PC-3 (cell line): ENCODE measurements at regions of chrX and their contacts with region 1.

Region 1: DNA sequence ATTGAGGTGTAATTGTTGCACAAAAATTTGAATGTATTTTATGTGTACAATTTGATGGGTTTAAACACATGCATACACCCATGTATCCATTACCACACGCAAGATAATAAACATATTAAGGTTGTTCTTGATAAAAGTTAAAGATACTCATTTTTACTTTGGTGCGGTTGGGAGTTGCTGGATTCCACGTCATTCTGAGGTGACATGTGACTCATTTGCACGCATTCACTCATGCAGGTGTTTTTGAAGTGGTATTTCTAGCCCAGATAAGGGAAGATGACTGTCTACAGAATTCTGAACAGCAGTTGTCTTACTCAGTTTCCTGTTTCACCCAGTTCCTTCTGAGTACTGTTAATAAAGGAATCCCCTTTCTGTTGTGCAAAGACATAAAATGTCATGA is 142.0 kb downstream of the RTL3 start:
- DNase-seq: peak; percentile 80
- ATAC-seq: peak; percentile 56
- H3K4me3 ChIP-seq: no peak overlapping the region
- H3K27ac ChIP-seq: peak overlapping the region; percentile 67
- H3K4me1 ChIP-seq: peaks cover 33% of the 10 kb centered on the region
- H3K27me3 ChIP-seq: no peaks in the 10 kb centered on the region
- CTCF ChIP-seq: no peak

Region 2: DNA sequence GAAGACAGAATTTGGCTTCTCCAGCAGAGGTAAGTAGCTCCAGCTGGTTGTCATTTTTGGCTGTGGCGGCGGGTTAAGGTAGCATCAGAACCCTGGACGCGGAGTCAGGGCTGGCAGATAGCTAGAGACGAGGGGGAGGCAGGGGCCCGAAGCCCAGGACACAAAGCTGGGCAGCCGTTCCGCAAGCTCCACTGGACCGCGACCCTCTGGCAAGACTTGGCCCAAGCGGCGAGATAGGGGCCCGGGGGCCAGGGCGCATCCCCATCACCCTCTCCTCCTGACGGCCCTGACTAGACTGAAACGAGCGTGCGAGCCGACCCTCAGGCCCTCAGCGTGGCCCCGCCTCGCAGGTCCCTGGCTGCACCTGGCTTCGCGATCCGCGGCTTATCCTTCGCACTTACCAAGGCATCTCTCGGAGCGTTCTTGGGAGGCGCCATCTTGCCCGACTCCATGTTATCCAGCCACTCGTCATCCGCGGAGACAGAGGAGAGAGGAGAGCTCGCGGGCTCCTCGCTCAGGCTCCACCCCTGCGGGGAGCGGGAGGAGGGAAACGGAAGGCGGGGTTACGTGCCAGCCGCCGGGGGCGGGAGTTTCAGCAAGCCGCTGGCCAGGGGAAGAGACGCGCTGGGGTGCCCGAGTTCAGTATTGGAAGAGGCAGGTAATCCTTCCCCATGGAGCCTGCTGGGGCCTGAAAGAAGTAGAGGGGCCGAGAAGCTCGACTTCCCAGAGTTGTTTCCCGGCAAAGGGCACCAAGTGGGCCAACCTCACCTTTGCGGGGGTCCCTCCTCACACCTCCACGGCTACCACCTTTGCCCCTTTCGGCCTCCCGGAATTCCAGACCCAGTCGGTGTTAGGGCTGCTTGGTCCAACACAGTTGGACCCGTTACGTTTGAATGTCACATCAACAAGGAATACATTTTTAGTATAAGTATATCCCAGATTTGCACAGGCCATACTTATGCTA is 377.7 kb before region 1 on chrX and contains the start of gene TAF9B:
- CTCF ChIA-PET with region 1: no interaction called
- POLR2A ChIA-PET with region 1: no interaction called
- intact Hi-C with region 1: loop called (anchors 5 kb)
- DNase-seq: peak; percentile 91
- ATAC-seq: peak; percentile 94
- H3K4me3 ChIP-seq: peak within 1 kb of the TSS; percentile 98
- H3K27ac ChIP-seq: peak within 1 kb of the TSS; percentile 5; the same call in 1 of the 2 replicates
- H3K4me1 ChIP-seq: peaks cover 10% of the 10 kb centered on the region
- H3K27me3 ChIP-seq: no peaks in the 10 kb centered on the region
- CTCF ChIP-seq: no peak
- total RNA-seq, gene TAF9B: 19.5 and 26.1 TPM in 2 replicates

Region 3: GRCh38 chrX:78333521-78333920 is 183.6 kb before region 1 on chrX:
- CTCF ChIA-PET with region 1: no interaction called
- POLR2A ChIA-PET with region 1: no interaction called
- intact Hi-C with region 1: loop called (anchors 10 kb)
- DNase-seq: peak; percentile 4
- ATAC-seq: peak; percentile 81
- H3K4me3 ChIP-seq: no peak overlapping the region
- H3K27ac ChIP-seq: no peak overlapping the region
- H3K4me1 ChIP-seq: no peaks in the 10 kb centered on the region; the same call in 1 of the 2 replicates
- H3K27me3 ChIP-seq: no peaks in the 10 kb centered on the region
- CTCF ChIP-seq: no peak

Region 4: GRCh38 chrX:78455901-78456300 is 61.2 kb before region 1 on chrX:
- CTCF ChIA-PET with region 1: no interaction called
- POLR2A ChIA-PET with region 1: no interaction called
- intact Hi-C with region 1: loop called (anchors 10 kb)
- DNase-seq: peak; percentile 77
- ATAC-seq: peak; percentile 97
- H3K4me3 ChIP-seq: no peak overlapping the region
- H3K27ac ChIP-seq: peak overlapping the region; percentile 28; the same call in 1 of the 2 replicates
- H3K4me1 ChIP-seq: peaks cover 27% of the 10 kb centered on the region
- H3K27me3 ChIP-seq: no peaks in the 10 kb centered on the region
- CTCF ChIP-seq: no peak

Region 5: DNA sequence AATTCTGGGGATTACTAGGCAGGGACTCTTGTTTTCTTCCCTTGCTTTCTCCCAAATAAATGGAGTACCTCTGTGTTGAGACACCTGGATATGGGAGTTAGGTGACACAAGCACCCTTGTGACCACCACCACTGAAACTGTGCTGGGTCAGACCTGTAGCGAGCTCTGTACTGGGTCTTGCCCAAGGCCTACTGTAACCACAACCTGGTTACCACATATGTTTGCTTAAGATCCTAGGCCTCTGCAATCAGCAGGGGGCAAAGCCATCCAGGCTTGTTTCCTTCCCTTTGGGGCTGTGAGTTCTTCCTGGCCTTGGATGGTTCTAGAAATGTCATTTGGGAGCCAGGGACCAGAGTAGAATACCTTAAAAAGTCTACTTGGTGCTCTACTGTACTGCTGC is 279.8 kb after region 1 on chrX:
- CTCF ChIA-PET with region 1: no interaction called
- POLR2A ChIA-PET with region 1: no interaction called
- intact Hi-C with region 1: no loop called
- DNase-seq: no peak
- ATAC-seq: no peak
- H3K4me3 ChIP-seq: no peak overlapping the region
- H3K27ac ChIP-seq: no peak overlapping the region
- H3K4me1 ChIP-seq: no peaks in the 10 kb centered on the region
- H3K27me3 ChIP-seq: no peaks in the 10 kb centered on the region
- CTCF ChIP-seq: no peak

Region 6: DNA sequence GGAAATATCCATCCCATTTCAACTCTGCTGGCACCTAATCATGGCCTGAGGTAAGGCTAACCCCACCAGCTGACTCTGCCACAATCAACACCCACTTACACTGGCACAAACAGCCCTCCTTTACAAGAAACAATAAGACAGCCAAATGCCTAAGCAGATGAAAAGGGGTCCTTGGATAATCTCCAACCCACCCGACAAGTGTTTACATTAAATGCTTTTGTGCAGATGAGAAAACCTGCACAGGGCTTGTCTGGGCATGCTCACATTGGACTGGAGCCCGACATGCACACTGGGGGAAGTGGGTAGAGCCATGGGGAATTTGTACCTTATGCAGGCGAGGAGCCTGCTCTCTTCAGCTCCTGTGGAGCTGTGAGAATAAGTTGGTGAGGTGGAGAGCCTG is 988.9 kb after region 1 on chrX:
- CTCF ChIA-PET with region 1: no interaction called
- POLR2A ChIA-PET with region 1: no interaction called
- intact Hi-C with region 1: no loop called
- DNase-seq: no peak
- ATAC-seq: no peak
- H3K4me3 ChIP-seq: no peak overlapping the region
- H3K27ac ChIP-seq: no peak overlapping the region
- H3K4me1 ChIP-seq: no peaks in the 10 kb centered on the region
- H3K27me3 ChIP-seq: no peaks in the 10 kb centered on the region
- CTCF ChIP-seq: no peak